Activated T-helper 1 cell treated with anti-CD3 and anti-CD28 coated beads, Interleukin-12 subunit alpha, Interleukin-12 subunit beta, Interleukin-2, Interleukin-4 antibody, amounts not matched to agents 30 ng/mL and 10 ng/mL and 1 ng/mL, durations not matched to agents 14 hours and 24 hours and 36 hours (primary cell): ENCODE measurements at regions of chr7 and their contacts with region 1.

Region 1: DNA sequence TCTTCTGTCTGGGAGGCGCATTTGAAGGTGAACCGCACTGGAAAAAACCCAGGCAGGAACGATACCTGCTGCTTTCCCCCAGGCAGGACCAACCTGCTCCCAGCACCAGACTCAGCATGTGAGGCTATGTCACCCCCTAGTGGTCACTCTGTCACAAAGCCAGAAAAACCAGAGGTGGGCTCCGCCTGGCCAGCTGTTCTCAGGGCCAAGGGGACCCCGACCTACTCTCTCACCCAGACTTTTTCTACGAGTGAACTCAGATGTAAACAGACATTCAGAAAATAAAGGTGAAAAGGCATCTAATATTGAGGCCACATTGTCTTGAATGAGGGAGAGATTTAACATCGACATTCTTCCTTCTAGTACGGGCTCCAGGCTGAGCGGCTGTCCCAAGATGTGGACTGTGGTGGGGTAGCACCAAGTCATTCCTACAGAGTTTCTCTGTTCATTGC is 117.3 kb downstream of the PRKAG2 start:
- DNase-seq: peak; percentile 43
- H3K4me3 Mint-ChIP-seq: no peak overlapping the region
- H3K27ac Mint-ChIP-seq: no peak overlapping the region
- H3K4me1 Mint-ChIP-seq: peaks cover 14% of the 10 kb centered on the region
- H3K27me3 Mint-ChIP-seq: peaks cover 5% of the 10 kb centered on the region

Region 2: DNA sequence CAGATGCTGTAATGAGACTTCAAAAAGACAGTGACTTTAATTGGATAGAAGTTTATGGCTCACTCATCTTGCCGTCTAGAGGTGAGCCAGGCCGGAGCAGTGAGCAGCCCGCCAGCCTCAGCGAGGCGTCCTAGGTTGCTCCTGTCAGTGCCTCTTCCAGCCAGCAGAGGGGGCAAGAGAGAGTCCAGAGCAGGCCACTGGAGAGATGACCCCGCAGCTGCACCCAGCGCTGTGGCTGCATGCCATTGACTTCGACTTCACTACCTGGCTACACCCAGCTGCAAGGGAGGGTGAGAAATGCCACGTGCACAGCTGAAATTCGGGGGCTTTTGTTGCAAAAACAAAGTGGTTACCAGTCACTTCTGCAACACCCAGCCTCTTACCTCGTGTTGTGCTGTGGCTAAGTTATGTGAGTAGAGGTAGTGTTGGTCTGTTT is 391.5 kb before region 1 on chr7:
- intact Hi-C with region 1: loop called (anchors 1 kb)
- DNase-seq: peak; percentile 64
- H3K4me3 Mint-ChIP-seq: no peak overlapping the region
- H3K27ac Mint-ChIP-seq: no peak overlapping the region
- H3K4me1 Mint-ChIP-seq: peaks cover 7% of the 10 kb centered on the region
- H3K27me3 Mint-ChIP-seq: no peaks in the 10 kb centered on the region

Region 3: DNA sequence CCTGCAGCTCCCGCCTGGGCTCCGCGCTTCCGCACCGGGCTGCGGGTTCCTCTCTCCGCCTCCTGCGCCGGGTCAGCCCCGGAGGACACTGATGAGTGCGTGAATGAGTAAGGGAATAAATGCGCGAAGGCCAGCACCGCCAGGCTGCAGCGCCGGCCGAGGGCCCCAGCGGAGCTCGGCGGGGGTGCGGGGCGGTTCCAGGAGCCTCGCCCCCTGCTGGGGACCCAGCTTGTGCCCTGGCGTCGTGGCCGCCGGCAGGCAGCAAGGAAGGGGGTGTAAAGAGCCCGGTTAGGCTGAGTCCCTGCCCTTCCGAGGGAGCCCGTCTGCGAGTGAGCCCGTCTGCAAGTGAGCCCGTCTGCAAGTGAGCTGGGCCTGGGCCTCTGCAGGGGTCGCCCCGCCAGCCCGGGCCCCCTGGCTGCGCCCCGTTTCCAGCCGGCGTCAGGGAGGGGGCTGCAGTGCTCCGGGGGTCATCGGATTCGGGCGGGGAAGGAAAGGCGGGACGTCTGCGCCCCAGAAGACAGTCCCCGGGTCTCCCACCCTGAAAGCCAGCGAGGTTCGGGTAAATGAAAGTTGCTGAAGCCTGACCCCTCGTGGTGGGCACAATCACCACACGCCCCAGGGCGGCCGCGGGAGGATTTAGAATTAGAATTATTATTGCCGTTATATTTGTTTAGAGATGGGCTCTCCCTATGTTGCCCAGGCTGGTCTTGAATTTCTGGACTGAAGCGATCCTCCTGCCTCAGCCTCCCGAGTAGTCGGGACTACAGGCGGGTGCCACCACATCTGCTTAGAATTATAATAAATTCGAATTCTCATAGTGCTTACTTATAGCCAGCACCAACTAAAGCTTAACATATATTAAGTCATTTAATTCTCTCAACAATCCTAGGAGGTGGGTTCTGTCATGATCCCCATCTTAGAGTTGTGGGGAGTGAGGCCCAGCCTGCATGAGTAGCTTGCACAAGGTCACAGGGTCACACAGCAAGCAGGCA is 311.1 kb before region 1 on chr7:
- intact Hi-C with region 1: loop called (anchors 1 kb)
- DNase-seq: peak; percentile 60
- H3K4me3 Mint-ChIP-seq: peak overlapping the region; percentile 58
- H3K27ac Mint-ChIP-seq: no peak overlapping the region
- H3K4me1 Mint-ChIP-seq: peaks cover 5% of the 10 kb centered on the region
- H3K27me3 Mint-ChIP-seq: peaks cover 28% of the 10 kb centered on the region

Region 4: GRCh38 chr7:151472644-151473380 is 286.8 kb before region 1 on chr7:
- intact Hi-C with region 1: loop called (anchors 1 kb)
- DNase-seq: no peak
- H3K4me3 Mint-ChIP-seq: no peak overlapping the region
- H3K27ac Mint-ChIP-seq: no peak overlapping the region
- H3K4me1 Mint-ChIP-seq: peaks cover 54% of the 10 kb centered on the region
- H3K27me3 Mint-ChIP-seq: no peaks in the 10 kb centered on the region

Region 5: GRCh38 chr7:151519765-151520418 is 239.7 kb before region 1 on chr7 and contains the start of gene RHEB:
- intact Hi-C with region 1: loop called (anchors 1 kb)
- DNase-seq: peak; percentile 97
- H3K4me3 Mint-ChIP-seq: peak within 1 kb of the TSS; percentile 94
- H3K27ac Mint-ChIP-seq: peak within 1 kb of the TSS; percentile 99
- H3K4me1 Mint-ChIP-seq: peaks cover 32% of the 10 kb centered on the region
- H3K27me3 Mint-ChIP-seq: peaks cover 10% of the 10 kb centered on the region
- total RNA-seq, gene RHEB: 62.5 and 65.5 TPM in 2 replicates

Region 6: GRCh38 chr7:151570366-151570915 is 189.2 kb before region 1 on chr7:
- intact Hi-C with region 1: loop called (anchors 1 kb)
- DNase-seq: no peak
- H3K4me3 Mint-ChIP-seq: no peak overlapping the region
- H3K27ac Mint-ChIP-seq: no peak overlapping the region
- H3K4me1 Mint-ChIP-seq: no peaks in the 10 kb centered on the region
- H3K27me3 Mint-ChIP-seq: no peaks in the 10 kb centered on the region

Region 7: GRCh38 chr7:151626422-151627115 is 133.0 kb before region 1 on chr7:
- intact Hi-C with region 1: loop called (anchors 1 kb)
- DNase-seq: no peak
- H3K4me3 Mint-ChIP-seq: no peak overlapping the region
- H3K27ac Mint-ChIP-seq: no peak overlapping the region
- H3K4me1 Mint-ChIP-seq: peaks cover 23% of the 10 kb centered on the region
- H3K27me3 Mint-ChIP-seq: peaks cover 9% of the 10 kb centered on the region